HEK293 (cell line): ENCODE measurements at regions of chr2 and their contacts with region 1.

Region 1: GRCh38 chr2:119702918-119703401 is 24.0 kb downstream of the TMEM177 start:
- H3K4me3 ChIP-seq: no peak overlapping the region
- H3K27ac ChIP-seq: no peak overlapping the region
- H3K4me1 ChIP-seq: no peaks in the 10 kb centered on the region
- CTCF ChIP-seq: peak; percentile 84; the same call in 1 of the 2 replicates

Region 2: DNA sequence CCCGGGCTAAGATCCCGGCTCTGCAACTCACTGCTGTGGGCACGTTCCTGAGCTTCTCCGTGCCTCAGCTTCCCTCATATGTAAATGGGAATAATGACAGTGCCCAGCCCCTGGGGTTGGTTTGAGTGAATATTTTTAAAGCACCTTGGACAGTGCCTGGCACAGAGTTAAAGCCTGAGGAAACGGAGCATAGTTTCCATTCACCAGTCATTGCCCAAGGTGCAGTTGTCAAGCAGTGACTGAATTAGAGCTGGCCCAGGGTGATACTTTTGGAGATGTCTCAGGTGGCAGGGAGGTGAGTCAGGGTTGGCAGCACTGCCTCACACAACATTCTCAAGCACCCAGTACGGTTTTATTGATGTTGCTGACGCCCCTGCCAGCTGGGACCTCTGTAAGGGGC is 11.8 kb before region 1 on chr2:
- CTCF ChIA-PET with region 1: interaction called, 17 read pairs
- POLR2A ChIA-PET with region 1: no interaction called
- H3K4me3 ChIP-seq: no peak overlapping the region
- H3K27ac ChIP-seq: no peak overlapping the region
- H3K4me1 ChIP-seq: peaks cover 5% of the 10 kb centered on the region; the same call in 1 of the 2 replicates
- CTCF ChIP-seq: no peak

Region 3: DNA sequence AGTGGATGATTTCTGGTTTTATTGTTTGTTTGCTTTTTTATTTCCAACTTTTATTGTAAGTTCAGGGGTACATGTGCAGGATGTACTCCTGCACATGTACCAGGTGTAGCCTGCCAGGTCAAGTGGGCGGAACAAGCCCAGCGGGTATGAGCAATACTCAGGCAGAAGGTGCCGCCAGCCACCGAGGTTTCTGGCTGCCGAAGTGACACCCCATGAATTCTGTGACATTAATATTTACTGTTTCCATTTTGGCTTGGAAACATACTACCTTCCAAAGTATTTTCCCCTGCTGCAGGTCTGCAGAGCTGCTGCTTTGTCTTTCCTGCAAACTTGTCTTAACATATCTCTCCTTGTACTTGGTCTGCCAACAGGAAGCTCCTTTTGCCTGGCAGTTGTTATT is 135.2 kb after region 1 on chr2:
- CTCF ChIA-PET with region 1: no interaction called
- POLR2A ChIA-PET with region 1: no interaction called
- H3K4me3 ChIP-seq: no peak overlapping the region
- H3K27ac ChIP-seq: 0 out of 2 replicates have a peak overlapping the region, but pooled peaks have one; percentile 11
- H3K4me1 ChIP-seq: peaks cover 16% of the 10 kb centered on the region
- CTCF ChIP-seq: no peak